Endothelial cell of umbilical vein (primary cell): ENCODE measurements at regions of chr11 and their contacts with region 1.

Region 1: DNA sequence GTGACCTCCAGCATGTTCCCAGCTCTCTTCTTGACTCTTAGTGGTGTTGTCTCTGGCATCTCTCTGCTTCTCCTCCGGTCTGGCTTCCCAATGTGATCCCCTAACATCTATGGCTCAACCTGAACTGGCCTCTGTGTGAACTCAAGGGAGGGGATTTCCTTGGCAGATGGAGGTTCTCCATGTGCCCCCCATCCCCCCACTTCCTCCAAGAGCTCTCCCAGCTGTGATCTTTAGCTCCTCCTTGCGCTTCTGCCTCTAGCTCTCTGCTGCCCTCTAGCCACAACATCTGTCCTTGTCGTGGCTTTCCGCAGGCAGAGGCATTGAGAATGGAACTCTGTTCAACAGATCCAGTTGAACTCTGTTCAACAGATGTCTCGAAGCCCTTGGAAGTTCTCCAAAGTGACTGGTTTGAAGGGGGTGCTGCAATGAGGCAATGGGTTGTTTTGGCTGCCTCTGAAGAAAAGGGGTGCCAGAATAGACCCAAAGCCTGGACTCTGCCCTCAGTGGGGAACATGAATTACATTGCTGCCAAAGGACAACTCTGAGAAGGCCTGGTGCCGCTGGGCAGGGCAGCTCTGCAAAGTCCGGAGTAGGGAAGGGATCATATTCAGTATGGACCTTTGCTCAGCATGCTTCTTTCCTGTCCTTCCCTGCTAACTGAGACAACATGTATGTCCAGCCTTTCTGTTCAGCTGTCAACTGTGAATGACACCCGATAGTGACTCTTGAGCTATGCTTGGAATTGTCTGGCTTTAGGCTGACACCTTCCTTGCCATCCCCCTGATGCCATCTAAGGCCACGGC is 61.9 kb downstream of the ADM start:
- DNase-seq: peak; percentile 94
- H3K4me3 ChIP-seq: no peak overlapping the region
- H3K27ac ChIP-seq: peak overlapping the region; percentile 21
- H3K4me1 ChIP-seq: peaks cover 6% of the 10 kb centered on the region
- H3K27me3 ChIP-seq: no peaks in the 10 kb centered on the region
- CTCF ChIP-seq: peak; percentile 85 to 91
- POLR2A ChIP-seq: no peak

Region 2: GRCh38 chr11:9972989-9973388 is 393.8 kb before region 1 on chr11:
- CTCF ChIA-PET with region 1: interaction called, 6 read pairs
- POLR2A ChIA-PET with region 1: no interaction called
- dilution Hi-C with region 1: no loop called
- intact Hi-C with region 1: loop called (anchors 2 kb)
- DNase-seq: peak; percentile 74
- H3K4me3 ChIP-seq: no peak overlapping the region
- H3K27ac ChIP-seq: no peak overlapping the region
- H3K4me1 ChIP-seq: peaks cover 14% of the 10 kb centered on the region
- H3K27me3 ChIP-seq: no peaks in the 10 kb centered on the region
- CTCF ChIP-seq: peak; percentile 58 to 61
- POLR2A ChIP-seq: no peak

Region 3: DNA sequence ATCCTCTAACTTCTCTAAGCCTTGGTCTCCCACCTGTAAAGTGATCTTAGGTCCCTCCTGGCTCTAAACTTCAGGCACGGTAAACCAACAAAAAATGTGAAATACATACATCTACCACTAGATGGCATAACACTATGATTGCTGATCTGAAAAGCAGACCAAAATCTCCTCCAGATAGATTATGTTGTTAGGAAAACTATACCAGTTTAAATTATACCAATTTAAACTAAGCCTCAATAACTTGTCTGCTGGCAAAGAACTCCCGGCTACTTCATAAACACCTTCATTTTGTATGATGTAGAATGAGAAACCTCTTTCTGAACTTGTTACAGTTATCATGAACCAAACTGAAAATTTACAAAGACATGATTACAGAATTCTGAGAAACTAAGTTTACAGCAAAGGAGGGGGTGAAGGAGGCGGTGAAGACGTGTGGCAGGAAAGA is 158.6 kb before region 1 on chr11:
- CTCF ChIA-PET with region 1: interaction called, 9 read pairs
- POLR2A ChIA-PET with region 1: no interaction called
- dilution Hi-C with region 1: no loop called
- intact Hi-C with region 1: loop called (anchors 2 kb)
- DNase-seq: peak; percentile 73
- H3K4me3 ChIP-seq: no peak overlapping the region
- H3K27ac ChIP-seq: no peak overlapping the region
- H3K4me1 ChIP-seq: no peaks in the 10 kb centered on the region
- H3K27me3 ChIP-seq: no peaks in the 10 kb centered on the region
- CTCF ChIP-seq: peak; percentile 39 to 41
- POLR2A ChIP-seq: no peak

Region 4: DNA sequence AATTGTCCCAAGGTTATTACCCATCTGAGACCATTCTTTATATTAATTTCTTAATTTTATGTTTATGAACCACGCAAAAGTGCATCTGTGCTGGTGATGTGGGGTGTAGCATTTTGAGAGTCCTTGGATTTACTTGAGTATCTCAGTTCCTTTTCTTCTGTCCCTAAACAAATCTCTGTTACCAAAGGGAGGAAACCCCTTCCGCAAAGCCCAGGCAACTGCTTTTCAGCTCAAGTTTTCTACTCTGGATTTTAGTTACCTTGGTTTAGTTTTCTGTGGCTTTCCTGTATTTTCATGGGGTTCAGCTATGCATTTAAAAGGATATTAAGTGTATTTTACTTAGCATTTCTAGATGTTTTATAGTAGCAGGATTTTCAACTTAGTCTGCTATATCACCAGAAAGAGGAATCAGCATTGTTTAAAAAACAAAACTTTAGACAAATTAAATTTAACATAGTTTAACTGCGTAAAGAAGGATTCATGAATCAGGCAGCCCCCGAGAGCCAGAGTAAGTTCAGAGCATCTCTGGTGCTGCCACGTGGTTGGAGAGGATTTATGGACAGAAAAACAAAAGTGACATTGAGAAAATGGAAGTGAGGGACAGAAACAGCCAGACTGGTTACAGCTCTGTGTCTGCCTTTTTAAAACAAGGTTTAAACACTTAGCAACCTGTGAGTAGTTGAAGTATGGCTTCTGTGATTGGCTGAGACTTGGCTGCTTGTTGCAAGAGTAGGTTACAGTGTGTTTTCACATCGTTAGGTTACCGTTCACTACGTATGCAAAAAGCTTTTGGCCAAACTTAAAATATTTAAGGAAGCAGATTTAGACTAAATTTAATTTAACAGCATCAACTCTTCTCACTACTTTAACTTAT is 52.3 kb before region 1 on chr11:
- CTCF ChIA-PET with region 1: interaction called, 117 read pairs
- POLR2A ChIA-PET with region 1: interaction called, 7 read pairs
- dilution Hi-C with region 1: no loop called
- intact Hi-C with region 1: no loop called
- DNase-seq: peak; percentile 46
- H3K4me3 ChIP-seq: no peak overlapping the region
- H3K27ac ChIP-seq: no peak overlapping the region
- H3K4me1 ChIP-seq: peaks cover 6% of the 10 kb centered on the region
- H3K27me3 ChIP-seq: no peaks in the 10 kb centered on the region
- CTCF ChIP-seq: no peak
- POLR2A ChIP-seq: no peak

Region 5: GRCh38 chr11:10351768-10352641 is 14.8 kb before region 1 on chr11:
- CTCF ChIA-PET with region 1: interaction called, 36 read pairs
- POLR2A ChIA-PET with region 1: no interaction called
- dilution Hi-C with region 1: no loop called
- intact Hi-C with region 1: loop called (anchors 1 kb)
- DNase-seq: peak; percentile 79
- H3K4me3 ChIP-seq: no peak overlapping the region
- H3K27ac ChIP-seq: peak overlapping the region; percentile 89
- H3K4me1 ChIP-seq: peaks cover 23% of the 10 kb centered on the region
- H3K27me3 ChIP-seq: no peaks in the 10 kb centered on the region
- CTCF ChIP-seq: no peak
- POLR2A ChIP-seq: no peak

Region 6: GRCh38 chr11:10653926-10654810 is 287.4 kb after region 1 on chr11:
- CTCF ChIA-PET with region 1: interaction called, 10 read pairs
- POLR2A ChIA-PET with region 1: interaction called, 3 read pairs
- dilution Hi-C with region 1: no loop called
- intact Hi-C with region 1: no loop called
- DNase-seq: peak; percentile 73
- H3K4me3 ChIP-seq: no peak overlapping the region
- H3K27ac ChIP-seq: no peak overlapping the region
- H3K4me1 ChIP-seq: peaks cover 21% of the 10 kb centered on the region
- H3K27me3 ChIP-seq: no peaks in the 10 kb centered on the region
- CTCF ChIP-seq: peak; percentile 72 to 78
- POLR2A ChIP-seq: no peak